ENCODE measurements at regions of chr17 and their contacts with region 1.

Region 1: GRCh38 chr17:17906418-17907215 is 65.6 kb downstream of the TOM1L2 start:
- DNase-seq: no peak
- H3K4me3 ChIP-seq: no peak overlapping the region
- H3K27ac ChIP-seq: peak overlapping the region in 39 of 59 donors; percentile 4 to 71 (median 40)
- H3K27me3 ChIP-seq: no peaks in the 10 kb centered on the region
- CTCF ChIP-seq: no peak

Region 2: DNA sequence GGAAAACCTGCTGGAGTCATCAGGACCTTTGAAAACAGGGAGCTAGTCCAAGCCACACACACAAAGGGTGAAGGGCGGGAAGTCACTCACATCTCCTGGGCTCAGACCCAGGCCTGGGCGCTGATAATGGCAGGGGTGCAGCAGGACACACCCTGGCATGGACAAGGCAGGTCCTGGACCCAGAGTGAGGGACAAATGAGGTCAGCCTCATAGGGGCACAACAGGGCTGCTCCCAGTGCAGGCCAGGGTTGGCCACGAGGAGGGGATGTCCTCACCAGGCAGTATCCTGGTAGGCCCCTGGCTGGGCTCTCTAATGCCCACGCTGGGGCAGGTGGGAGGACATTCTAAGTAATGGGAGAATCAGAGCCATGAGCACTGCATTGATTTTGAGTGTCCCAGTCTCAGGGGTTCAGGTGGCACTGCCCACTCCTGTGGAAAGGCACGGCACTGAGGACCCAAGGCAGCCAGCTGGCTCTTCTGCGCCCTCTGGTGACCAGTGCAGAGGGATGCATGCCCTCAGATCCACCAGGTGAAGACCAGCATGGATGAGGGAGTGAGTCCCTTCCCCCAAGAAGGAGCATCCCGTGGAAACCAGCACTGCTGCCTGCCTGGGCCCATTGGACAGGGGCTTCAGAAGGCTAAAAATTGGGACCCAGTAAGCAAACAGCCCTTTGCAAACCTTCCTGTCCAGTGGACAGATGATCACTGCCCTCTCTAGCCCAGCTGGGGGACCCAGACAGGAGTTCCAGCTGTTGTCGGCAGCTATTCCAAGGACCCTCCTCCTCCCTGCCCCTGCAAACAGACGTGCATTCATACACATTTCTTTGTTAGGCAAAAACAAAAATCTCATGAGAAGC is 46.5 kb before region 1 on chr17:
- intact Hi-C with region 1: loop called in 1 of 2 experiments (anchors 5 kb)
- DNase-seq: peak in 9 of 10 donors; percentile 65 to 83 (median 76)
- H3K4me3 ChIP-seq: no peak overlapping the region
- H3K27ac ChIP-seq: peak overlapping the region in 51 of 59 donors; percentile 5 to 79 (median 60)
- H3K27me3 ChIP-seq: no peaks in the 10 kb centered on the region
- CTCF ChIP-seq: peak; percentile 77 to 100 (median 97)

Region 3: DNA sequence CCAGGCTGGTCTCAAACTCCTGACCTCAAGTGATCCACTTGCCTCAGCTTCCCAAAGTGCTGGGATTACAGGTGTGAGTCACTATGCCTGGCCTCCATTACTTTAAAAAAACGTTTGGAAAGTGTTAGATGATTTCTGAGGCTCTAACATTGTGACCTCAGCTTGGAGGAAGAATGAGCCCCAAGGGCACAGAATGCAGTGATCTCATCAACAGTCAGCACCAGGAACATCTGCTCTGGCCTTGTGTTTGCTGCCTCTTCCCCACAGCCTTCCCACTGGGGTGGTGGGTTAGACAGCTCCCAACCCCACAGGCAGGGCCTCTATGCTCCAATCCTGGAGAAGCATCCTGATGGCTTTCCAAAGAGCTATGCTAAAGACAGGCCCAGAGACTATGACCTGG is 32.1 kb before region 1 on chr17:
- intact Hi-C with region 1: loop called in 1 of 2 experiments (anchors 5 kb)
- DNase-seq: no peak
- H3K4me3 ChIP-seq: no peak overlapping the region
- H3K27ac ChIP-seq: peak overlapping the region in 48 of 59 donors; percentile 3 to 95 (median 66)
- H3K27me3 ChIP-seq: no peaks in the 10 kb centered on the region
- CTCF ChIP-seq: no peak

Measured in dorsolateral prefrontal cortex (tissue), 120 donors.